ENCODE measurements at regions of chr10 and their contacts with region 1.

Region 1: DNA sequence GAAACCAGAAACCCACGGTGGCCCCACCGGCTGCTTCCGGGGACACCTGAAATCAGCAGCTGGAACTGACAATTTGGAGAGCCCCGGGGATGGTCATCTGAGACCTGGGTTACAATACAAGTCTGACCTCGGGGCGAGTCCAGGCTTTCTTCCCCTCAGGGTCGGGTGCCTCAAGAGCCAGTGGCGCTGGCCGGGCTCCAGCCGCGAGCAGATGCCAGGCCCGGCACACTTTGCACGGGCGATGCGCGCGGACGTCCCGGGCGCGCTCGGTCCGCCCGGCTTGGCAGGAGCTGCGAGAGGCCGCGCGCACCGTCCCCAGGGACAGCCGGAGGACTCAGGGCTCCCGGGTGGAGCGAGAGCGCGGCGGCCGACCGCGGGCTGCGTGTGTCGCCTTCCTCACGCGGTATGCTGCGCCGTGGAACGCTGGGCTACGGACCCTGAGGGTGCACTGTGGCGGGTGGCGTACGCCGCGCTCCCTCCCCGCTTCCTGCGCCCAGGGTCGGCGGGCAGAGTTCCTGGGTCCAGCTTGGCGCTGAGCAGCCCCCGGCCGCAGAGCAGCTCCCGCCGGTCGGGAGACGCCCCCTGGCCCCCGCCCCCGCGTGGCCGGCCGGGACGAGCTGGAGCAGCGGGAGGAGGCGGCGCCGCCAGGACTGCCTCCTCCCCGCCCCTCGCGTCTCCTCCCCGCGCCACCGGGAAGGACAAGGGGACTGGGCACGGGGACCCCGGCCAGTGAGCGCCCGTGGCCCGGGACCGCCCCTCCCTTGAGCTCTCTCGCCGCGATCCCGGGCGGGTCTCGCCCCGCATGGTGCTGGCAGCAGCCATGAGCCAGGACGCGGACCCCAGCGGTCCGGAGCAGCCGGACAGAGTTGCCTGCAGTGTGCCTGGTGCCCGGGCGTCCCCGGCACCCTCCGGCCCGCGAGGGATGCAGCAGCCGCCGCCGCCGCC is at the start of gene RBM20:
- DNase-seq: peak; percentile 79
- ATAC-seq: peak; percentile 80
- total RNA-seq, gene RBM20: 103 TPM

Region 2: DNA sequence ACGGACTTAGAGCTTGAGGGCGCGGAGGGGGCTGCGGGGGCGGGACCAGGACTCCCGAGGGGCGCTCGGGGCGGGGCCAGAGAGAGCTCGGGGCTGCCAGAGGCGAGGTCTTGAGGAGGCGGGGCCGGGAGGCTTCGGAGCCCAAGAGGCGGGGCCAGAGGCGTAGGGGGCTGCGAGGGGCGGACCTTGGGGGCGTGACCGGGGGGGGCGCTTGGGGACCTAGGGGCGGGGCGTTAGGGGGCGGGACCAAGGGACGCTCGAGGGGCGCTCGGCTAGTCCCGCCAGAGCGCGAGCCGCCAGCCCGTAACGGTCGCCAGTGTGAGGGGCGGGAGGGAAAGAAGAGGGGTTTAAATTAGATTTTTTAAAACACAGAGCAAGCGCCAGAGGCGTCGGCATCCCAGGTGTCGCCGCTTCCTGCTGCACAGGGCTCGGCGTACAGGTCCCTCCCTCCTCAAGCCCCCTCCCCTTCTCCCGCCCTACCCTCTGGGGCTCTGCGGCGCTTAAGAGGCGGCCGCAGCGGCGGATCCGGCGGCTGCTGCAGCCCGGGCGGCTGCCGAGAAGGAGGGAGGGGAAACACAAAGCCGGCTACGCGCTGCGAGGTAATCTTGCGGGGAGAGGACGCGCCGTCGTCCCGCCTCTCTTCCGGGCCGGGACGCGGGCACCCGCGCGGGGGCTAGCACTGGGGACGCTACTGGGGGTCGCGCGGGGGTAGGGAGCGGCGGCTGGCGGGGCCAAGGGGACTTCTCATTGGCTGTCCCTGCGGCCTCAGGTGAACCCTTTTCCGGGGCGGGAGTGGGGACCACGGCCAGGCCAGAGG is 636.0 kb before region 1 on chr10 and contains the start of gene ADD3:
- intact Hi-C with region 1: no loop called
- DNase-seq: peak; percentile 97
- ATAC-seq: peak; percentile 91
- total RNA-seq, gene ADD3: 115 TPM

Region 3: DNA sequence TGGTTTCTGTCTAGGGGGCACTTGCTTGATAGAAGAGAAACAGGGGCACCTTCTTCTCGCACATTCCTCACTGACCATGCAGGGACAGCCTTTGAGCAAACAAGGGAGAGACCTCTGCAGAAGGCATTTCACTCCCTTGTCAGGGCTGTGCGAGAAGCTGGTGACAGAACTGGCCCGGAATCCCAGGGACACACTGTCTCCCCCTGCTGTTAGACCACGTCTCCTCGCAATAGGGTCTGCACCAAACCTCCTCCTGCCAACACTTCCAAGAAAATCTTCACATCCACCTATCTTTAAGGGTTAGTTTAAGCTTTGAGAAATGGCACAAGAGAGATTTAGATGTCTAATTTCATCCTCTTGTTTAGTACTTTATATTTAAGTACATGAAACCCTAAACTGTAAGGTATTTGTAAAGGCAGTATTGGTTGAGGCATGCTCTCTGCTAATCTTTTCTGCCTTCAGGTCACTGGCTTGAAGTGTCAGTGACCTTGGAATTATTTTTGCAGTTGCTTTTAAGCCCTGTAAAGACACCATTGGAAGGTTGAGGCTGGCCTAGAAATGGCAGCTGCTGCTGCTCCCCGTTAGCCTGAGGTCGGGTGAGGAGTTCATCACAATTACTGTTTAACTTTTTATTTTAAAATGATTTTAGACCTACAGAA is 37.2 kb after region 1 on chr10:
- intact Hi-C with region 1: loop called (anchors 5 kb)
- DNase-seq: peak; percentile 46
- ATAC-seq: peak; percentile 54

Measured in Right ventricle myocardium superior (tissue), 1 donor.